H1 (cell line): ENCODE measurements at regions of chr14 and their contacts with region 1.

Region 1: DNA sequence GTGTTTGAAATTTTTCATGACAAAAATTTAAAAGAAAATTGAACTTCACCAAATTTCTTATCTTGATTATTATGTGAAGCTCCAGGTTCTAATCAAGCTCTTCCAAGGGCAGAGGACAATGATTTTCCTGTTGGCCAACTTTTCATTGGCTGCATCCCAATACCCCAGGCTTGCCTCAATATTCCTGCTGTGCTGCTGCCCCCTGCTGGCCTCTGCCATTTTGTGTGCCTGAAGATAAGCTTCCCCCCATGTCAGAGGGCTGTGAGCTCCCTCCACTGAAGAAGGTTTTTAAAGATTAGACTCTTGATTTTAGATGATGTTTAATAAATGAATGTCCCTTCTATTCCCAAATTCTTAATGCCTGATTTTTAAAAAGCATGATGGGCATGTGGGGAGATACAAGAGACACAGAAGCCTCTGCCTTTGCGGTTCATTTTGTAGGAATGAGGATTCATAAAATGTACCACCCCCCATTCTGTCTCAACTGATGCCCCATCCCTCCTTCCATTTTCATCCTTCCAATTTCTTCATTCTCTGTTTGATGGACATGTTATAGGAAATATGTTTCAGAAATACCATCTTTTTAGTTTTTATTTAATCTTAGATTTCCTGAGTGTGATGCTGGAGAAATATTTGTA is 76.7 kb upstream of the RGS6 start:
- DNase-seq: peak; percentile 43 to 92
- H3K4me3 ChIP-seq: no peak overlapping the region
- H3K27ac ChIP-seq: no peak overlapping the region
- H3K4me1 ChIP-seq: no peaks in the 10 kb centered on the region
- H3K27me3 ChIP-seq: no peaks in the 10 kb centered on the region
- CTCF ChIP-seq: peak; percentile 81 to 82 (median 81)
- EP300 ChIP-seq: no peak; a peak in 1 of 3 replicates
- POLR2A ChIP-seq: no peak
- RAD21 ChIP-seq: peak; percentile 90 to 94

Region 2: DNA sequence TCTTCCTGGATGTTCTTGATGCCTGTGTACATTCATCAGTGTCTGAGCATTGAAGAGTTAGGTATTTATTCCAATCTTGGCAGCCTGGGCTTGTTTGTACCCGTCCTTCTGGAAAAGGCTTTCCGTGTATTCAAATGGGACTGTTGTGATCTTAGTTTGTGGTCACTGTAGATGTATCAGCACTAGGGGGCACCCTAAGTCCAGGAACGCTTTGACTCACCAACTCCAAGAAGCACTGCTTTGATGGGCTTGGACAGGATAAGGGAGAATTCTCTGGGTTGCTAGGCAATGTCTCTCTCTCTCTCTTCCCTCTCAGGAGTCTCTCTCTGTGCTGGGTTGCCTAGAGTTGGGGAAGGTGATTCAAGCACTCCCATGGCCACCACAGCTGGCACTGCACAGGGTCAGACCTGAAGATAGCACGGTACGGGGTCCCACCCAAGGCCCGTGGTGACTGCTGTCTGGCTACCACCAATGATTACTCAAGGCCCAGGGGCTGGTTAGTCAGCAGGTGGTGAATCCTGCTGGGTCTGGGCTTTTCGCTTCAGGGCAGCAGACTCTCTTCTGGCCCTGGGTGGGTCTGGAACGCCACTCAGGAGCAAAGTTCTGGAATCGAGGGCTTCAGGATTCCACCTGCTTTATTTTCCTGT is 134.4 kb before region 1 on chr14:
- CTCF ChIA-PET with region 1: interaction called, 27 read pairs
- POLR2A ChIA-PET with region 1: no interaction called
- DNase-seq: peak; percentile 38 to 64
- H3K4me3 ChIP-seq: no peak overlapping the region
- H3K27ac ChIP-seq: no peak overlapping the region
- H3K4me1 ChIP-seq: no peaks in the 10 kb centered on the region
- H3K27me3 ChIP-seq: no peaks in the 10 kb centered on the region
- CTCF ChIP-seq: peak; percentile 42 to 75 (median 73)
- EP300 ChIP-seq: no peak
- POLR2A ChIP-seq: no peak
- RAD21 ChIP-seq: peak; percentile 89 to 92

Region 3: DNA sequence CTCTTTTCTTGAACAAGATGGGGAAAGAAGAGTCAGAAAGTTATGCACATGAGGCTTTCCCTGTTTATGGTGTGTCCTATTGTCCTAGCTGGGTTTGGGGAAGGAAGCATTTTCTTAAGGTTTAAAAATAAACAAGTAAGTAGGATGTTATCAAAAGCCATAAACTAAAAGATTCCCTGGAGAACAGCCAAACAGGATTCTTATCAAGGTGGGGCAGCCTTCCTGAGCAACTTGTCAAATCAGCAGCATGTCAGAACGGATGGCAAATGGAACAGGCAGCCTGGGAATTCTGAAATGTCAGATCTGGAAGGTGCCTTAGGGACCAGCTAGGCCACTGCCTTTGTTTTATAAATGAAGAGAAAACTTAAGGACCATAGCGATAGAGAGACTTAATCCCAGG is 75.4 kb before region 1 on chr14:
- CTCF ChIA-PET with region 1: interaction called, 10 read pairs
- POLR2A ChIA-PET with region 1: no interaction called
- DNase-seq: no peak
- H3K4me3 ChIP-seq: no peak overlapping the region
- H3K27ac ChIP-seq: no peak overlapping the region
- H3K4me1 ChIP-seq: peaks cover 4 to 10% (median 7%) of the 10 kb centered on the region in 4 experiments; a peak in 5 of 7 replicates
- H3K27me3 ChIP-seq: no peaks in the 10 kb centered on the region; a peak in 1 of 7 replicates
- CTCF ChIP-seq: no peak
- EP300 ChIP-seq: no peak
- POLR2A ChIP-seq: no peak
- RAD21 ChIP-seq: no peak

Region 4: GRCh38 chr14:71833476-71833875 is 22.0 kb before region 1 on chr14:
- CTCF ChIA-PET with region 1: interaction called, 12 read pairs
- POLR2A ChIA-PET with region 1: no interaction called
- DNase-seq: no peak
- H3K4me3 ChIP-seq: no peak overlapping the region
- H3K27ac ChIP-seq: no peak overlapping the region
- H3K4me1 ChIP-seq: peaks cover 0 to 4% (median 0%) of the 10 kb centered on the region in 4 experiments; a peak in 2 of 7 replicates
- H3K27me3 ChIP-seq: no peaks in the 10 kb centered on the region
- CTCF ChIP-seq: no peak
- EP300 ChIP-seq: no peak
- POLR2A ChIP-seq: no peak
- RAD21 ChIP-seq: no peak

Region 5: DNA sequence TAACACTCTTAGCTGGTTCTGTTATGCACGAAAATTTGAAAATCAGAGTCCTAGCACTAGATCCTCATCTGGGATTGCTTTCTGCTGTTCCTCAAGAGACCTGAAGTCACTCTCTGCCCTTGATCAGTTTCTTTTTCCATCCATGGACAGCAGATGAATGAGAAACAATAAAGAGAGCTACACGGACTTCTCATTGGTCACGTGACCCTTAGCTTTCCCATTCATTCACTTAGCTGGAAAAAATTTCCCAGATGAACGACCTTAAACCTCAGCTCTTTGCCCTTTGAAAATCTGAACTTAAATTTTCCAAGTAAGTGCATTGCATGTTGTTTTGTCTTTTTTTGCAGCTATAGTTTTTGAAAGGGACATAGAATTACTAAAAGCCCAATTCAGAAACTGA is 49.5 kb after region 1 on chr14:
- CTCF ChIA-PET with region 1: no interaction called
- POLR2A ChIA-PET with region 1: no interaction called
- DNase-seq: no peak
- H3K4me3 ChIP-seq: no peak overlapping the region
- H3K27ac ChIP-seq: no peak overlapping the region
- H3K4me1 ChIP-seq: no peaks in the 10 kb centered on the region
- H3K27me3 ChIP-seq: no peaks in the 10 kb centered on the region
- CTCF ChIP-seq: no peak
- EP300 ChIP-seq: no peak
- POLR2A ChIP-seq: no peak
- RAD21 ChIP-seq: no peak